ENCODE measurements at regions of chrX and their contacts with region 1.

Region 1: GRCh38 chrX:71579136-71579989 is 1.1 kb downstream of the GCNA start:
- DNase-seq: no peak
- ATAC-seq: no peak
- H3K4me3 ChIP-seq: no peak overlapping the region
- H3K27ac ChIP-seq: no peak overlapping the region
- H3K4me1 ChIP-seq: no peaks in the 10 kb centered on the region
- H3K27me3 ChIP-seq: no peaks in the 10 kb centered on the region
- CTCF ChIP-seq: no peak

Region 2: DNA sequence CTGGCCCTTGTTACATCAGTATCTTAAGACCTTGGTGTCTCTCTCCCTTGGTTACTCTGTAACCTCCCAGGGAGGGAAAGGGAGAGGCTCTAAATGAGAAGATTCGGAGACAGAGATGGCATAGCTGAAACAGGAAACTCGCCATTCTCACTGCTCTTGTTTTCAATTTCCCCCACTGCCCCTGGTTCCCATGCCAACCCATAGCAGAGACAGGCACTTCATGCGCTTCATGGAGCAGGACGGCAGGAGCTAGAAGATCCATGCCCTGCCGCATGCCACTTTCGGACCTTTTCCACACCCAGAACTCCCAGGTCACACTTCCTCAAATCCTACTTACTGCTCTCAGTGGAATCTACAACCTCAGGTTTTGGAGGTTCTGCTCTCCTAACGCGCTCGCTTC is 328.5 kb before region 1 on chrX:
- CTCF ChIA-PET with region 1: no interaction called
- POLR2A ChIA-PET with region 1: no interaction called
- intact Hi-C with region 1: no loop called
- DNase-seq: no peak
- ATAC-seq: no peak
- H3K4me3 ChIP-seq: no peak overlapping the region
- H3K27ac ChIP-seq: no peak overlapping the region
- H3K4me1 ChIP-seq: peaks cover 17% of the 10 kb centered on the region
- H3K27me3 ChIP-seq: no peaks in the 10 kb centered on the region
- CTCF ChIP-seq: no peak

Region 3: DNA sequence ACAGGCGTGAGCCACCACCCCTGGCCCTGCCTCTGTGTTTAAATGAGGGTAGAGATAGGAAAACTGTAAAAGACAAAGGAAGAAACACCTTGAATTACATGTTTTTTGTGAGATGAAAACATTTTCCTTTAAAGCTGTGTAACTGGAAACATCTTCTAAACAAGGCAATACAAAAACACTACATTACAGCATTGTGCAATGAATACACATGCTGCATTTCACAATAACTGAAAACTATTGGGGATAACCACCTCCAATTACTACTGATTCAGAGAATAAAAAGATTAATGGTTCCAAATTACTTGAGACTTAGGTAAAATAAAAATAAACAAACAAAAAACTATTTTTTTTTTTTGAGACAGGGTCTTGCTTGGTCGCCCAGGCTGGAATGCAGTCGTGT is 54.0 kb before region 1 on chrX:
- CTCF ChIA-PET with region 1: no interaction called
- POLR2A ChIA-PET with region 1: no interaction called
- intact Hi-C with region 1: no loop called
- DNase-seq: no peak
- ATAC-seq: no peak
- H3K4me3 ChIP-seq: no peak overlapping the region
- H3K27ac ChIP-seq: no peak overlapping the region
- H3K4me1 ChIP-seq: peaks cover 9% of the 10 kb centered on the region
- H3K27me3 ChIP-seq: no peaks in the 10 kb centered on the region
- CTCF ChIP-seq: no peak

Region 4: GRCh38 chrX:71541210-71542022 is 37.9 kb before region 1 on chrX:
- CTCF ChIA-PET with region 1: no interaction called
- POLR2A ChIA-PET with region 1: interaction called, 14 read pairs
- intact Hi-C with region 1: no loop called
- DNase-seq: peak; percentile 46
- ATAC-seq: peak; percentile 37
- H3K4me3 ChIP-seq: peak overlapping the region; percentile 47; the same call in 1 of the 2 replicates
- H3K27ac ChIP-seq: peak overlapping the region; percentile 87
- H3K4me1 ChIP-seq: peaks cover 61% of the 10 kb centered on the region
- H3K27me3 ChIP-seq: no peaks in the 10 kb centered on the region
- CTCF ChIP-seq: no peak

Region 5: GRCh38 chrX:71998836-71999509 is 419.6 kb after region 1 on chrX:
- CTCF ChIA-PET with region 1: no interaction called
- POLR2A ChIA-PET with region 1: no interaction called
- intact Hi-C with region 1: no loop called
- DNase-seq: peak; percentile 63
- ATAC-seq: peak; percentile 76
- H3K4me3 ChIP-seq: no peak overlapping the region
- H3K27ac ChIP-seq: no peak overlapping the region
- H3K4me1 ChIP-seq: peaks cover 4% of the 10 kb centered on the region
- H3K27me3 ChIP-seq: no peaks in the 10 kb centered on the region
- CTCF ChIP-seq: peak; percentile 79

Measured in PC-3 (cell line).